CD4-positive, alpha-beta T cell (primary cell): ENCODE measurements at regions of chr1 and their contacts with region 1.

Region 1: GRCh38 chr1:54474639-54475251 is 68.6 kb upstream of the SSBP3 start:
- DNase-seq: peak in 8 of 14 experiments; percentile 24 to 67 (median 50)
- ATAC-seq: peak; percentile 56
- H3K4me3 ChIP-seq: peak overlapping the region; percentile 56
- H3K4me3 Mint-ChIP-seq: peak overlapping the region; percentile 91
- H3K27ac ChIP-seq: peak overlapping the region; percentile 70 to 79
- H3K27ac Mint-ChIP-seq: peak overlapping the region; percentile 88
- H3K4me1 ChIP-seq: peaks cover 48% of the 10 kb centered on the region
- H3K4me1 Mint-ChIP-seq: peaks cover 60% of the 10 kb centered on the region
- H3K27me3 ChIP-seq: no peaks in the 10 kb centered on the region
- H3K27me3 Mint-ChIP-seq: no peaks in the 10 kb centered on the region
- CTCF ChIP-seq: no peak

Region 2: DNA sequence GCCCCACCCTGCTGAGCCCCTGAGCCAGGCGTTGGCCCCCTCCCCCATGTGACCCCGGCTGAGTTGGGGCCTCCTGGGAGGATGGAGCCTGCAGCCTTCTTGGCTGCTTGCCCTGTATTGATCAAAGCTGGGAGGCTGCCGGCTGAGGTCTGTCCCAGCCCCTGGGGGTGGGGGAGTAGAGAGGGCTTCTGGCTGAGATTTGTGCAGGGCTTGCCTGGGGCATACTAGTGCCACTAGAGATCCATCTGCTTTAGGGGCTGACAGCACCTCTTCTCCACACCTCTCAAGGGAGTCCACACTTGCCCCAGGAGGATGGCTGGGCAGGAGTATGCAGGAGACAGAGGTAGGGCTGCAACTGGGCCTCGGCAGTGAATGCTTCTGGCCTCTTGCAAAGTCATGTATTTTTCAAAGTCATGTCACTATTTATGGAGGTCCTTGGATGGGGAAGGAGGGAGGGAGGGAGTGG is 15.0 kb before region 1 on chr1:
- CTCF ChIA-PET with region 1: interaction called, 3 read pairs
- POLR2A ChIA-PET with region 1: interaction called, 11 read pairs
- intact Hi-C with region 1: loop called in 1 of 2 experiments (anchors 2 kb)
- DNase-seq: peak in 3 of 14 experiments; percentile 16 to 48 (median 26)
- ATAC-seq: peak; percentile 9
- H3K4me3 ChIP-seq: no peak overlapping the region
- H3K4me3 Mint-ChIP-seq: peak overlapping the region; percentile 66
- H3K27ac ChIP-seq: peak overlapping the region; percentile 55 to 56
- H3K27ac Mint-ChIP-seq: peak overlapping the region; percentile 83
- H3K4me1 ChIP-seq: peaks cover 41% of the 10 kb centered on the region
- H3K4me1 Mint-ChIP-seq: peaks cover 45% of the 10 kb centered on the region
- H3K27me3 ChIP-seq: no peaks in the 10 kb centered on the region
- H3K27me3 Mint-ChIP-seq: no peaks in the 10 kb centered on the region
- CTCF ChIP-seq: no peak